CD14-positive monocyte (primary cell): ENCODE measurements at regions of chr5 and their contacts with region 1.

Region 1: GRCh38 chr5:128201065-128201926 is 117.7 kb downstream of the SLC12A2 start:
- DNase-seq: peak; percentile 15 to 48 (median 25)
- H3K4me3 ChIP-seq: peak overlapping the region in 1 of 3 experiments; percentile 37
- H3K4me3 Mint-ChIP-seq: peak overlapping the region; percentile 56 to 80
- H3K27ac ChIP-seq: no peak overlapping the region
- H3K27ac Mint-ChIP-seq: no peak overlapping the region
- H3K4me1 ChIP-seq: peaks cover 7 to 8% of the 10 kb centered on the region in 2 donors
- H3K4me1 Mint-ChIP-seq: peaks cover 11% of the 10 kb centered on the region
- H3K27me3 ChIP-seq: peaks cover 0 to 8% of the 10 kb centered on the region in 2 donors
- H3K27me3 Mint-ChIP-seq: peaks cover 5 to 12% (median 10%) of the 10 kb centered on the region in 3 donors
- CTCF ChIP-seq: peak; percentile 94

Region 2: DNA sequence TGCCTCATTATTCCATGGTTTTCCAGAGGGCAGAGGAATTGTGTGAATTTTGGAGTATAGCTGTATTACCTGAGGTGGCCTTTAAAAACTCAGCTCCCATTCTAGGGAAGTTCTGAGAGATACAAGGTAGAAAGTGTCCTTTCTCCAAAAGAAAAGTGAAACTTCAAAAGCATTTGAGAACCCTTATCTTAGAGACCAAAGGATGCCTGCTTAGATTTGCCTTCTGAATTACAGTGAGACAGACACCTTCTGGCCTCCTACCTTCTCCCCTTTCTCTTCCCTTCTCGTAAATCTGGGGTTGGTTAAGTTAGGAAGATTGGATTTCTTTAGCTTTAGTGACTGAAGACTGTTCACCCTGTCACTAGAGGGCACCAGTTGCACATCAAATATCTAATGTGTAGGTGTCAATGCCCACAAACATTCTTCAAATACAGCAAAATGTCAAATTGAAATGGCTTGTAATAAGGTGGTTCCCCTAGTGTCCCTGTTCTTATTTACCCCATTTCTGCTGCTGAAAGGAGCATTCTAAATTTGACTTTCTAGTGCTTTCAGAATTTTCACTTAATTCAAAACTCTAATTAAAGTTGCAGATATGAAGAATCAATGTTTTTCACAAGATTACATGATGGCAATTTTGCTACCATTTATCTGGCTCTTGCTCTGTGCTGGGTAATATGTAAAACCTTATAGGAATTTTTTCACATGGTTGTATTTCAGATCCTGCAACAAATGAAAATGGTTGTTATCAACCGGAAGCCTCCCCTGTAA is 637.1 kb before region 1 on chr5:
- intact Hi-C with region 1: loop called (anchors 2 to 5 kb)
- DNase-seq: peak; percentile 29 to 51 (median 51)
- H3K4me3 ChIP-seq: no peak overlapping the region
- H3K4me3 Mint-ChIP-seq: no peak overlapping the region
- H3K27ac ChIP-seq: no peak overlapping the region
- H3K27ac Mint-ChIP-seq: no peak overlapping the region
- H3K4me1 ChIP-seq: peaks cover 0 to 3% of the 10 kb centered on the region in 2 donors
- H3K4me1 Mint-ChIP-seq: peaks cover 25% of the 10 kb centered on the region
- H3K27me3 ChIP-seq: no peaks in the 10 kb centered on the region
- H3K27me3 Mint-ChIP-seq: peaks cover 0 to 1% (median 0%) of the 10 kb centered on the region in 3 donors
- CTCF ChIP-seq: peak; percentile 69

Region 3: GRCh38 chr5:127757576-127757975 is 443.7 kb before region 1 on chr5:
- intact Hi-C with region 1: loop called in 1 of 2 experiments (anchors 10 kb)
- DNase-seq: no peak
- H3K4me3 ChIP-seq: no peak overlapping the region
- H3K4me3 Mint-ChIP-seq: no peak overlapping the region
- H3K27ac ChIP-seq: no peak overlapping the region
- H3K27ac Mint-ChIP-seq: no peak overlapping the region
- H3K4me1 ChIP-seq: no peaks in the 10 kb centered on the region
- H3K4me1 Mint-ChIP-seq: no peaks in the 10 kb centered on the region
- H3K27me3 ChIP-seq: no peaks in the 10 kb centered on the region
- H3K27me3 Mint-ChIP-seq: peaks cover 0 to 3% (median 0%) of the 10 kb centered on the region in 3 donors
- CTCF ChIP-seq: no peak

Region 4: GRCh38 chr5:128722551-128722950 is 521.3 kb after region 1 on chr5:
- intact Hi-C with region 1: no loop called
- DNase-seq: no peak
- H3K4me3 ChIP-seq: no peak overlapping the region
- H3K4me3 Mint-ChIP-seq: no peak overlapping the region
- H3K27ac ChIP-seq: no peak overlapping the region
- H3K27ac Mint-ChIP-seq: no peak overlapping the region
- H3K4me1 ChIP-seq: no peaks in the 10 kb centered on the region
- H3K4me1 Mint-ChIP-seq: no peaks in the 10 kb centered on the region
- H3K27me3 ChIP-seq: no peaks in the 10 kb centered on the region
- H3K27me3 Mint-ChIP-seq: no peaks in the 10 kb centered on the region
- CTCF ChIP-seq: no peak